ENCODE measurements at regions of chr1 and their contacts with region 1.

Region 1: DNA sequence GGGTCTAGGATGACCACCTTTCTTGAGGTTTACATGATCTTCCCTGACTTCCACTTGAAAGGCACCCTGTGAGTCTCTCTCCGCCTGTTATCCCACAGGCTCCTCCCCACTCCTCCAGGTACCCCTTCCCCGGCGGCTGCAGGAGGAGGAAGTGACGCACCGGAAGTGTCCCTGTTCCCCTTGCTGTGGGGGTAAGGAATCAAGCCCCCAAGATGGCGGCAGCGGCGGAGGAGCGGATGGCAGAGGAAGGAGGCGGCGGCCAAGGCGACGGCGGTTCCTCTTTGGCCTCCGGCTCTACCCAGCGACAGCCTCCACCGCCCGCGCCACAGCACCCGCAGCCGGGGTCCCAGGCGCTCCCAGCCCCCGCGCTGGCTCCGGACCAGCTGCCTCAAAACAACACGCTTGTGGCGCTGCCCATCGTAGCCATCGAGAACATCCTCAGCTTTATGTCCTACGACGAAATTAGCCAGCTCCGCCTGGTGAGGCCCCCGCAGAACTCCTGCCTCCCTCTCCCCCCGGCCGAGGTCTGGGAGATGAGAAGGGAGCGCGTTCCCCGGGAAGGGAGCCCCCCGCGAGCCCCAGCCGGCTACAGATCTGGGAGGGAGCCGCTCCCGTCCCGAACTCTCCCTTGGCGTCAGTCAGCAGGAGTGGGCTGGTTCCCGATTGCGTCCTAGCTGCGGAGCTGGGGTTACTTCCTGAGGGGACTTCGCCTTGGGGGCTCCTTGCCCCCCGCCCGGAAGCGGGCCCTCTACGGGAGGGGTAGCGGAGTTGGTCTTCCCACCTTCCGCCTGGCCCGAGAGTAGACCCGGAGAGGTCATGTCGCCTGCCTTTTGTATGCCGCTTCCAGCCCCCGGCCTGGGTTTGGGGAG is at the start of gene FBXO28:
- DNase-seq: peak; percentile 93
- CTCF ChIP-seq: no peak

Region 2: GRCh38 chr1:224203243-224204016 is 89.3 kb after region 1 on chr1:
- in situ Hi-C with region 1: no loop called
- DNase-seq: no peak
- CTCF ChIP-seq: no peak

Region 3: GRCh38 chr1:224329842-224330753 is 215.9 kb after region 1 on chr1 and contains the start of gene NVL:
- in situ Hi-C with region 1: loop called (anchors 10 kb)
- DNase-seq: peak; percentile 79
- CTCF ChIP-seq: no peak

Measured in GM13977 (cell line).